ENCODE measurements at regions of chrX and their contacts with region 1.

Region 1: DNA sequence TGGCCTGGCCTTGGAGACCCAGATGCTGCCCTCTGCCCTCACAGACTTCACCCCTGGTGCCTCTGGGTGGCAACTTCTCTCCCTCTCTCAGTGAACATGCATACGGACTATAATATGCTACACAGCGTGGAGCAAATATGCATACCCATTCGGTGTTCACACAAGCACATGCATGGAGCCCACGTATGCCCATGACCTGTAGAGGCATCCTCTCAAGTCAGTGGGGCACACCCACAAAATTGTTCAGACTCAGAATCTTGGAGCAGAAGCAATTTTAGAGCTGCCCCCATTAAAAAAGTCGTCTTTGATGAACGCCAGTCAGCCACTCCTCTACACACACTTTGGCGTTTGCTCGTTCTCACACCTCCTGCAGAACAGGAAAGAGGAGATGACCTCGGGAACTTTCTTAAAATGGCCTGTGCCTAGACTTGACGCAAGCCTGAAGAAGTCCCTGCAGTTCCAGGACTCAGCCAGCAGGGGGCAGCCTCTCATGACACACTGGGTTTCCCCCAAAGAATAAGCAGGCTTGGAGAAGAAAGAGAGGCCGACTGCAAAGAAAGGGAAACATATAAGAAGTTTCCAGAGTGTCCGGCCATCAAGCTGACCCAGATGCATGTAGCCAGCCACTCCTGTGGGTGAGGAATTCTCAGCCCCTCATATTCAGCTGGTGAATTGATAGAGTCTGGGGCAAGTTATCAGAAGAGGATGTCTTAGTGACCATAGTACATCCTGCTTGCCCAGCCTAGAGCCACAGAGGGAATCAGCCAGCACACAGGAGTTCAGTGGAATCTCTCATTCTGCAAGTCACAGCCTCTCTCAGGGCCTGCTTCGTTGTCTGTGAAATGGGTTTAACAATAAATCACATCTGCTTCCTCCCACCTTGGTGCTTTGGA is 17.3 kb downstream of the APLN start:
- DNase-seq: peak; percentile 69
- H3K4me3 ChIP-seq: no peak overlapping the region
- H3K27ac ChIP-seq: no peak overlapping the region
- H3K4me1 ChIP-seq: no peaks in the 10 kb centered on the region
- CTCF ChIP-seq: peak; percentile 89

Region 2: GRCh38 chrX:129360175-129360574 is 277.3 kb before region 1 on chrX:
- CTCF ChIA-PET with region 1: no interaction called
- POLR2A ChIA-PET with region 1: no interaction called
- intact Hi-C with region 1: no loop called
- DNase-seq: peak; percentile 47
- H3K4me3 ChIP-seq: no peak overlapping the region
- H3K27ac ChIP-seq: no peak overlapping the region
- H3K4me1 ChIP-seq: no peaks in the 10 kb centered on the region
- CTCF ChIP-seq: peak; percentile 76

Region 3: GRCh38 chrX:129565046-129565650 is 72.3 kb before region 1 on chrX:
- CTCF ChIA-PET with region 1: no interaction called
- POLR2A ChIA-PET with region 1: no interaction called
- intact Hi-C with region 1: no loop called
- DNase-seq: no peak
- H3K4me3 ChIP-seq: no peak overlapping the region
- H3K27ac ChIP-seq: no peak overlapping the region
- H3K4me1 ChIP-seq: no peaks in the 10 kb centered on the region
- CTCF ChIP-seq: no peak

Region 4: DNA sequence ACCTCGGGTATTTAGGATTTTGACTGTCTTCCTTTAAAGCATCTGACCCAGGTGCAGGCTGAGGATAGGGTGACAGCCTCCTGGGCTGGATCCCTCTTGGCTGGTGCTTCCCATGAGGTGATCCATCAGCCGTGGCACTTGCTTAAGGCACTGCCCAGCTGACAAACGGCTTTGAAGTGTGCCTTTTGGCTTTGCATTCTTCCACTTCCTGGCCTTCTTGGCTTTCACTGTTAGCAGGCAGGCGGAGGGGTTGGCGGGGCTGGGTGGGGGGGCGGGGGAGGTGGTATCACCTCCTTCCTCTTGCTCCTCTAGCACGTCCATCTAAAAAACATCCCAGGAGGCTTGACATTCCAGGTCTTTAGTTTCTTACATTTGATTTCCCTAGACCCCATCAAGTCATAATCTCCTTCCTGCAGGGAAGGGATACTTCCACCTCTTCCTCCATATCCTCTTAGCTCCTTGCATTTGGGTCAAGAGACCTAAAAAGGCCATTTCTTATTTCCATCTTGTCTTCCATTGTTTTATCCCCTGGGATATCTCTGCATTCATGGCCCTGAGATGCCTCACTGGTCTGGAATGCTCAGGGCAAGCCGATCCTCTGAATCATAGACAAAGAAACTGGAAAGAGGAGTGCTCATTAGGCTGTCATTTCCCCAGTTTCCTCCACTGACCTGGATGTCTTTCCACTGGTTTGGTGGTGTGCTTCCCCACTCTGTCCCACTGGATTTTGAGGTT is 28.6 kb after region 1 on chrX:
- CTCF ChIA-PET with region 1: no interaction called
- POLR2A ChIA-PET with region 1: no interaction called
- intact Hi-C with region 1: no loop called
- DNase-seq: no peak
- H3K4me3 ChIP-seq: no peak overlapping the region
- H3K27ac ChIP-seq: no peak overlapping the region
- H3K4me1 ChIP-seq: no peaks in the 10 kb centered on the region
- CTCF ChIP-seq: no peak

Region 5: GRCh38 chrX:129823115-129823514 is 185.7 kb after region 1 on chrX:
- CTCF ChIA-PET with region 1: no interaction called
- POLR2A ChIA-PET with region 1: no interaction called
- intact Hi-C with region 1: loop called (anchors 2 kb)
- DNase-seq: peak; percentile 71
- H3K4me3 ChIP-seq: no peak overlapping the region
- H3K27ac ChIP-seq: no peak overlapping the region
- H3K4me1 ChIP-seq: peaks cover 10% of the 10 kb centered on the region
- CTCF ChIP-seq: peak; percentile 85

Region 6: GRCh38 chrX:129876771-129877305 is 239.4 kb after region 1 on chrX:
- CTCF ChIA-PET with region 1: no interaction called
- POLR2A ChIA-PET with region 1: no interaction called
- intact Hi-C with region 1: loop called (anchors 10 kb)
- DNase-seq: no peak
- H3K4me3 ChIP-seq: no peak overlapping the region
- H3K27ac ChIP-seq: no peak overlapping the region
- H3K4me1 ChIP-seq: no peaks in the 10 kb centered on the region
- CTCF ChIP-seq: no peak

Region 7: GRCh38 chrX:130030826-130031225 is 393.4 kb after region 1 on chrX:
- CTCF ChIA-PET with region 1: no interaction called
- POLR2A ChIA-PET with region 1: no interaction called
- intact Hi-C with region 1: no loop called
- DNase-seq: no peak
- H3K4me3 ChIP-seq: no peak overlapping the region
- H3K27ac ChIP-seq: no peak overlapping the region
- H3K4me1 ChIP-seq: no peaks in the 10 kb centered on the region
- CTCF ChIP-seq: no peak

Region 8: GRCh38 chrX:130060122-130061069 is 422.9 kb after region 1 on chrX:
- CTCF ChIA-PET with region 1: interaction called, 3 read pairs
- POLR2A ChIA-PET with region 1: no interaction called
- intact Hi-C with region 1: loop called (anchors 1 kb)
- DNase-seq: peak; percentile 76
- H3K4me3 ChIP-seq: peak overlapping the region; percentile 66
- H3K27ac ChIP-seq: no peak overlapping the region
- H3K4me1 ChIP-seq: peaks cover 10% of the 10 kb centered on the region
- CTCF ChIP-seq: peak; percentile 80

Measured in OCI-LY7 (cell line).